Activated naive CD4-positive, alpha-beta T cell treated with anti-CD3 and anti-CD28 coated beads for 36 hours (primary cell): ENCODE measurements at regions of chr19 and their contacts with region 1.

Region 1: DNA sequence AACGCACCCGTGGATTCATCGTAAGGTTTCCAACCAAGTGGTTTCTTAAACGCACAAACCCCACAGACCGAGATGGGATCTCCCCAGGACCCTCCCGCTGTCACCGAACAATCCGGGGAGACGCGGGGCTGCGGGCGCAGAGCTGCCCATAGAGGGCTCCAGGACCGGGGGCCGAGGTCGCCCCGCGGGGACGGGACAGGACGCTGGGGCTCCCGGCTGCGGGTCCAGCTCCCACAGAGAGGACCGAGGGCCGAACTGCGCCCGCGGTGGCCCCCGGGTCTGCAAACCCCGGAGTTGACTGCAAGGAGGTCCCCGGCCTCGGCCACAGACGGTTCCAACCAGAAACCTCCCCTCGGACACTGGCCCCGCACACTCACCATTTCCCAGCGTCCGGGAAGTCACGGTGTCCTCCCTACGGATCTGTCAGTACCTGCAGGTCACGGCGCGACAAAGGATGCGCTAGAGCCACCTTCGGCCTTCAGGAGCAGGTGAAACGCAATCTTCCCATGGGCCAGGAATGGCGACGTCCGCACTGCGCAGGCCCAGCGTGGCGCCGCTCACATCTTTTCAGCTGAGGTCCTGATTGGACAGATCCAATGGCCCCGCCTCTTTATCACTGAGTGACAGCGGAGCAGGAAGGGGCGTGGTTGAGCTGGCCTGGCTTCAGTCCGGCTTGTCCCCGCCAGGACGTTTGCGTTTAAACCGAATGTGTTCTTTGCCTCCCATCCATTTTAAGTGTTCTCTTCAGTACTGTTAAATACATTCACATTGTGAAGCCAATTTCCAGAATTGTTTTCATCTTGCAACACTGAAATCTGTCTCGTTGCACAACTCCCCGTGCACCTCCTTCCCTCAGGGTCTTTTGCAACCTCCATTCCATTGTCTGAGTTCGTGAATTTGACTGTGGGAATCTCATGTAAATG is at the start of gene ZNF14:
- DNase-seq: peak; percentile 98
- H3K4me3 Mint-ChIP-seq: peak within 1 kb of the TSS; percentile 97
- H3K27ac Mint-ChIP-seq: peak within 1 kb of the TSS; percentile 96
- H3K4me1 Mint-ChIP-seq: peaks cover 20% of the 10 kb centered on the region
- H3K27me3 Mint-ChIP-seq: no peaks in the 10 kb centered on the region
- total RNA-seq, gene ZNF14: 8.4 TPM

Region 2: DNA sequence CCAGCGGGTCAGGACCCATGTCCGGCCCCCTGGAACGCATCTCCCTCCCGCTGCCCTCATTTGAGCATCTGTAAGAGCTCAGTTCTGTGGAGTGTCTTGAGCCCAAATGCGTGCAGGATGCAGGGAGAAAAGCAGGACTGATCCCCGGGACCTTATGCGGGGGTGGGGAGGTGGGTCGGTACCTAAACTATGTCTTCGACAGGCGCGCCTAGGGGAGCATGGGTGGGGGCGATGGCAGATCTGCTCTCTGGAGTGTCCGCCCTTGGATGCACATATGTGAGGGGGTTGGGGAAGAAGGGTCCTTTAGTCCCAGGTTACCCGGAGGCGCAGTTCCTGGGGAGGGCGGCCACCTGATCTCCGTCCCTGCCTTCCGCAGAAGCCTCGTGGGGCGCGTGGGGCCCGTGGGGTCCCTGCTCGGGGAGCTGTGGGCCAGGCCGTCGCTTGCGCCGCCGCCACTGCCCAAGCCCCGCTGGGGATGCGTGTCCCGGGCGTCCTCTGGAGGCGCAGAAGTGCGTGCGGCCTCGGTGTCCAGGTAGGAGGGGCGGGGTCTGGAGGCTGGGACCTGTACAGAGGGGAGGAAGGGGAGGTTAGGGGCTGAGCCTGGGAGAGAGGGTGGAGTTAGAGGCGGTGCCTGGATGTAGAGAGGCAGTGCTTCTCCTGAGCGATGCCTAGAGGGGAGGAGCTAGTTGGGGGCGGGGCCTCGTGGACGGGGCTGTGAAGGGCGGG is 192.0 kb before region 1 on chr19:
- CTCF ChIA-PET with region 1: no interaction called
- intact Hi-C with region 1: loop called (anchors 5 kb)
- DNase-seq: peak; percentile 87
- H3K4me3 Mint-ChIP-seq: peak overlapping the region; percentile 62
- H3K27ac Mint-ChIP-seq: no peak overlapping the region
- H3K4me1 Mint-ChIP-seq: peaks cover 33% of the 10 kb centered on the region
- H3K27me3 Mint-ChIP-seq: peaks cover 8% of the 10 kb centered on the region

Region 3: GRCh38 chr19:19578252-19578651 is 154.6 kb before region 1 on chr19:
- CTCF ChIA-PET with region 1: no interaction called
- intact Hi-C with region 1: no loop called
- DNase-seq: no peak
- H3K4me3 Mint-ChIP-seq: no peak overlapping the region
- H3K27ac Mint-ChIP-seq: no peak overlapping the region
- H3K4me1 Mint-ChIP-seq: peaks cover 17% of the 10 kb centered on the region
- H3K27me3 Mint-ChIP-seq: no peaks in the 10 kb centered on the region

Region 4: DNA sequence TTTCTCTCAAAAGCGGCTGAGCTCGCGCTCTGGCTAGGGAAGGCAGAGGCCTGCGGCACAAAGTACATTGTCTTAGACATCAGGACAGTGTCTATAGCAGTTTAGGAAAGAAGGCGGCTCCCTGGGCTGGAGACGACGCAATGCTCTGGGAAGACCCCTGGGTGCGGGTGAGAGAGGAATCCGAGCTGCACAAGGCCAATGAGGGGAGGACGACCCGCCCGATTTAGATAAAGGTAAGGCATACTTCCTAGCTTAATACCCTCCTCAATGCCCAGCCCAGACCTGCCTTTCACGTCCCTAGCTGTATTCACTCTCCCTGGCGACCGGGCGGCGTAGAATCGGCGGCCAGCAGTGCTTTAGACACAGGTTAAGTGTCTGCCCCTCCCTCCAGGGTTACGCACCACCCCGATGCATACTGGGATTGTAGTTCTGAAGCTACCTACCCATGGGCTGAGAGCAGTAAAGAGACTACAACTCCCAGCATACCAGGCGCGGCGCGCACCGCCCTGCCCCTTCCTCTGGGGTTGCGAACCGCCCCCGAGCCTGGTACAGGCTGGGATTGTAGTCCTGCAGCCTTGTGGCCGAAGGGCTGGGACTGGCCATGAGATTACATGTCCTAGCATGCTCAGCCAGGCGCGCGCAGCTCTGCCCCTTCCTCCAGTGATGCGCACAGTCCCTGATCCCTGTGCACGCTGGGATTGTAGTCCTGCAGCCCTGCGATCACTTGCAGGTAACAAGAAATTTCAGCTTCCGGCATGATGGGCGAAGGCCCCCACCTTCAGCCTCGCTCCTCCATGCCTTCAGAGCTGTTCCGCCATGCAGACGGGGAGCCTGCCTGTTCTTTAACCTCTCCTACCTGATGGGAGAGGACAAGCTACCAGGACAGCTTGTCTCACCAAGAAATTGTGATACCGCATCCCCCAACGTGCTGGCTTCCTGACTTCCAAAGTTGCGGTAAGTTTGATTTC is 43.5 kb after region 1 on chr19:
- CTCF ChIA-PET with region 1: interaction called, 5 read pairs
- intact Hi-C with region 1: loop called (anchors 1 kb)
- DNase-seq: peak; percentile 95
- H3K4me3 Mint-ChIP-seq: peak overlapping the region; percentile 90
- H3K27ac Mint-ChIP-seq: peak overlapping the region; percentile 90
- H3K4me1 Mint-ChIP-seq: peaks cover 44% of the 10 kb centered on the region
- H3K27me3 Mint-ChIP-seq: no peaks in the 10 kb centered on the region

Region 5: DNA sequence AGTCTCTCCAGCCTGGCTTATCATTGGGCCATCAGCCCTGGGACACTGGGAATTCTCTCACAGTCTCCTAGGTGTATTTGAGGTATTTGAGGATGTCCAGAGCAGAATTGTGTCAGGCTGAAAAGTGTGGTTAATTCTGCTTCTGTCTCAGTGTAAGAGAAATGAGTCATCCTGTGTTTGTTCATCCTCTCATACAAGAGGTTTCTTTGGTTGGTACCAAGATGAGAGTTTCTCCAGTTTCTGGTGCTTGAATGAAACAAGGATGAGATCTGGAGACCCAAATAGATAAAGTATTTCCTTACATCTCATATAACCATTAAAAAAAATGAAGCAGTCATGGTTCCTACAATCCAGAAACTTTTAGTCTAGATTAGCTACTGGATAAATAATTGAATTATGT is 140.5 kb after region 1 on chr19:
- CTCF ChIA-PET with region 1: no interaction called
- intact Hi-C with region 1: loop called (anchors 2 kb)
- DNase-seq: no peak
- H3K4me3 Mint-ChIP-seq: no peak overlapping the region
- H3K27ac Mint-ChIP-seq: no peak overlapping the region
- H3K4me1 Mint-ChIP-seq: peaks cover 35% of the 10 kb centered on the region
- H3K27me3 Mint-ChIP-seq: no peaks in the 10 kb centered on the region

Region 6: DNA sequence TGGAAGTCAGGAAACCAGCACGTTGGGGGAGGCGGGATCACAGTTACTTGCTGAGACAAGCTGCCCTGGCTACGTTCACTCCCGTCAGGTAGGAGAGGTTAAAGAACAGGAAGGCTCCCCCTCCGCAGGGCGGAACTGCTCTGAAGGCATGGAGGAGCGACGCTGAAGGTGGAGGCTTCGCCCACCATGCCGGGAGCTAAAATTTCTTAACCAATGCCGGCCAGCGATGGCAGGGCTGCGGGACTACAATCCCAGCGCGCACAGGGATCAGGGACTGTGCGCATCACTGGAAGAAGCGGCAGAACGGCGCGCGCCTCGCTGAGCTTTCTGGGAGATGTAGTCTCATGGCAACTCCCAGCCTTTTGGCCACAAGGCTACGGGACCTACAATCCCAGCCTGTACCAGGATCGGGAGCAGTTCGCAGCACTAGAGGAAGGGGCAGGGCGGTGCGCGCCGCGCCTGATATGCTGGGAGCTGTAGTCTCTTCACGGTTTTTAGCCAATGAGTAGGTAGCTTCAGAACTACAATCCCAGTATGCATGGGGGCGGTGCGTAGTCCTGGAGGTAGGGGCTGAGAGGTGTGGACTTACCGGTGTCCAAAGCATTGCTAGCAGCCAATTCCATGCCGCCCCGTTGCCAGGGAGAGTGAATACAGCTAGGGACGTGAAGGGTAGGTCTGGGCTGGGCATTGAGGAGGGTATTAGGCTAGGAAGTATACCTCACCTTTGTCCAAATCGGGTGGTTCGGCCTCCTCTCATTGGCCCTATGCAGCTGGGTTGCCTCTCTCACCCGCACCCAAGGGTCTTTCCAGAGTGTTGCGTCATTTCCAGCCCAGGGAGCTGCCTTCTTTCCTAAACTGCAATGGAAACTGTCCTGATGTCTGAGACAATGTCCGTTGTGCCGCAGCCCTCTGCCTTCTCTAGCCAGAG is 319.3 kb after region 1 on chr19:
- CTCF ChIA-PET with region 1: no interaction called
- intact Hi-C with region 1: loop called (anchors 5 kb)
- DNase-seq: peak; percentile 87
- H3K4me3 Mint-ChIP-seq: peak overlapping the region; percentile 95
- H3K27ac Mint-ChIP-seq: peak overlapping the region; percentile 86
- H3K4me1 Mint-ChIP-seq: peaks cover 6% of the 10 kb centered on the region
- H3K27me3 Mint-ChIP-seq: no peaks in the 10 kb centered on the region